ENCODE measurements at regions of chr12 and their contacts with region 1.

Region 1: GRCh38 chr12:68451261-68452077 is 119.3 kb upstream of the MDM1 start:
- DNase-seq: peak; percentile 15
- H3K4me3 ChIP-seq: peak overlapping the region; percentile 15
- H3K27ac ChIP-seq: peak overlapping the region; percentile 54
- H3K4me1 ChIP-seq: peaks cover 50% of the 10 kb centered on the region
- H3K27me3 ChIP-seq: no peaks in the 10 kb centered on the region
- CTCF ChIP-seq: no peak

Region 2: GRCh38 chr12:68364893-68365725 is 86.4 kb before region 1 on chr12:
- intact Hi-C with region 1: loop called (anchors 10 kb)
- DNase-seq: peak; percentile 91
- H3K4me3 ChIP-seq: peak overlapping the region; percentile 59
- H3K27ac ChIP-seq: peak overlapping the region; percentile 94
- H3K4me1 ChIP-seq: peaks cover 48% of the 10 kb centered on the region
- H3K27me3 ChIP-seq: no peaks in the 10 kb centered on the region
- CTCF ChIP-seq: no peak

Region 3: DNA sequence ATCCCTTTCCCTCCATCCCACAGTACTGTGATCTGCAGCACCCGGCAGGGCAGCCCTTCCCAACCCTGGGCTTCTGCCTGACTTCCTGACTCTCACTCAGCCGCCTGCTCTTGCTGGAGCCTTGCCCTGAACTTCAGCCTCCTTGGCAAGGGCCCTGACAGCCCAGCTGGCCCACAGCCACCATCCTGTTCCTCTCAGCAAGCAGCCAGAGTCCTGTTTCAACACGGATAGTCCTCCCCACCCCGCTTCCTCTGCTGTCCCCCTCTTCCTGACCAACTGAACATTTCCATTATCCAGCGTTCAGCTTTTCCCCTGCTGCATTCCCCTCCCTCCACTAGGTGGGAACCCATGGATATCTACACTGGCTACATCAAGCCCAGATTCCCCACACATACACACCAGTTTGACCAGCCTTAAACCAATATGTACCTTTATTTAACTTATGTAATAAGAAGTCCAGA is 45.3 kb before region 1 on chr12:
- intact Hi-C with region 1: loop called (anchors 10 kb)
- DNase-seq: peak; percentile 94
- H3K4me3 ChIP-seq: peak overlapping the region; percentile 38
- H3K27ac ChIP-seq: peak overlapping the region; percentile 85
- H3K4me1 ChIP-seq: peaks cover 32% of the 10 kb centered on the region
- H3K27me3 ChIP-seq: no peaks in the 10 kb centered on the region
- CTCF ChIP-seq: peak; percentile 64

Region 4: DNA sequence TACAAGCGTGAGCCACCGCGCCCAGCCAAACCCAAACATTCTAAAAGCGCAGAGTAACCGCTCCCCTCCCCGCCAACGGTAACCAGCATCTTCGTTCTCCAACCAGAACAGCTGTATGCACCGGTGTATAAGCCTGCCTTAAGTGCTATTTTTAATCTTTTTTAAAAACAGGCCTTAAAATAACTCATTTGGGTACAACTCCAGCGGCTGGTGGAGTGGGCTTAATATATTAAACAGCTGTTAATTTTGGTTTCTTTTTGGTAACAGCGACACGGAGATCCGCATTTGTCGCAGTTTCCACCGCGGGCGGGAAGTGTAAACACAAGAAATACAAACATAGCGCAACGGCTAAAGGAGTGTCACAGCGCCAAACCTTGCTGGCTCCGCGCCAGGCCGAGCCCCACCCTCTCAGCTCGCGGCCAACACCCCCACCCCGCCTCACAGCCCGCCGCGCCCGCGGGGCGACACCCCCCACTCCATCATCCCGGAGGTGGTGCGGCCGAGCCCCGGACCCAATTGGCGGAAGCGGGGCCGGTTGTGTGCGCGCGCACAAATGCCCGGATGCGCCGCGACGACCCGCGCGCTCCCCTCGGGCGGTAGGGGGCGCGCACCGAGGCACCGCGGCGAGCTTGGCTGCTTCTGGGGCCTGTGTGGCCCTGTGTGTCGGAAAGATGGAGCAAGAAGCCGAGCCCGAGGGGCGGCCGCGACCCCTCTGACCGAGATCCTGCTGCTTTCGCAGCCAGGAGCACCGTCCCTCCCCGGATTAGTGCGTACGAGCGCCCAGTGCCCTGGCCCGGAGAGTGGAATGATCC is 356.3 kb after region 1 on chr12 and contains the start of gene MDM2:
- intact Hi-C with region 1: loop called (anchors 10 kb)
- DNase-seq: peak; percentile 94
- H3K4me3 ChIP-seq: peak within 1 kb of the TSS; percentile 97
- H3K27ac ChIP-seq: peak within 1 kb of the TSS; percentile 99
- H3K4me1 ChIP-seq: peaks cover 56% of the 10 kb centered on the region
- H3K27me3 ChIP-seq: no peaks in the 10 kb centered on the region
- CTCF ChIP-seq: peak; percentile 91
- total RNA-seq, gene MDM2: 36.0 TPM

Measured in left ventricle myocardium inferior (tissue), 1 donor.